ENCODE measurements at regions of chr7 and their contacts with region 1.

Region 1: GRCh38 chr7:70788276-70788675 is 343.7 kb upstream of the GALNT17 start:
- DNase-seq: no peak
- ATAC-seq: no peak
- H3K4me3 ChIP-seq: no peak overlapping the region
- H3K27ac ChIP-seq: no peak overlapping the region
- H3K4me1 ChIP-seq: peaks cover 22% of the 10 kb centered on the region
- H3K27me3 ChIP-seq: no peaks in the 10 kb centered on the region
- CTCF ChIP-seq: no peak
- EP300 ChIP-seq: no peak
- POLR2A ChIP-seq: no peak
- RAD21 ChIP-seq: no peak

Region 2: GRCh38 chr7:70738151-70738885 is 50.0 kb before region 1 on chr7:
- CTCF ChIA-PET with region 1: no interaction called
- POLR2A ChIA-PET with region 1: no interaction called
- in situ Hi-C with region 1: no loop called
- intact Hi-C with region 1: loop called (anchors 10 kb)
- DNase-seq: no peak
- ATAC-seq: no peak
- H3K4me3 ChIP-seq: no peak overlapping the region
- H3K27ac ChIP-seq: no peak overlapping the region
- H3K4me1 ChIP-seq: no peaks in the 10 kb centered on the region
- H3K27me3 ChIP-seq: no peaks in the 10 kb centered on the region
- CTCF ChIP-seq: 0 out of 2 replicates have a peak, but pooled peaks have one; percentile 12
- EP300 ChIP-seq: no peak
- POLR2A ChIP-seq: no peak
- RAD21 ChIP-seq: no peak

Region 3: DNA sequence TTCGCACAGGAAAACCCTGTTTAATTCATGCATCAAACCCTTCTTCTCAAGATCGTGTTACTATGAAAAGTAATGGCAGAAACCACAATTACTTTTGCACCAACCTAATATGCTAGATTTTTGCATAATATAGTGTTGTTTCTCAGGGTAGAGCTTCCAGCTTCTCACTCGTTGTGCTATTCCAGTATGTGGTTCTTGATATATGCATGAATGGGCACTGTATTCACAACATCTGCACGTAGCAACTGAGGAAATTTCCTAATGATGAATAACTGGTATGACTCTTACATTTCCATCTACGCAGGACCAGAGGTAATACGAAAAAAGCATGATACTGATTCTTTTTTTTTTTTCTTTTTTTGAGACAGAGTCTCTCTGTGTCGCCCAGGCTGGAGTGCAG is 17.1 kb after region 1 on chr7:
- CTCF ChIA-PET with region 1: no interaction called
- POLR2A ChIA-PET with region 1: no interaction called
- in situ Hi-C with region 1: no loop called
- intact Hi-C with region 1: no loop called
- DNase-seq: no peak
- ATAC-seq: no peak
- H3K4me3 ChIP-seq: no peak overlapping the region
- H3K27ac ChIP-seq: no peak overlapping the region
- H3K4me1 ChIP-seq: 0 out of 2 replicates have a peak, but pooled peaks cover under 1% of the 10 kb centered on the region
- H3K27me3 ChIP-seq: no peaks in the 10 kb centered on the region
- CTCF ChIP-seq: no peak
- EP300 ChIP-seq: no peak
- POLR2A ChIP-seq: no peak
- RAD21 ChIP-seq: no peak